ENCODE measurements at regions of chr4 and their contacts with region 1.

Region 1: DNA sequence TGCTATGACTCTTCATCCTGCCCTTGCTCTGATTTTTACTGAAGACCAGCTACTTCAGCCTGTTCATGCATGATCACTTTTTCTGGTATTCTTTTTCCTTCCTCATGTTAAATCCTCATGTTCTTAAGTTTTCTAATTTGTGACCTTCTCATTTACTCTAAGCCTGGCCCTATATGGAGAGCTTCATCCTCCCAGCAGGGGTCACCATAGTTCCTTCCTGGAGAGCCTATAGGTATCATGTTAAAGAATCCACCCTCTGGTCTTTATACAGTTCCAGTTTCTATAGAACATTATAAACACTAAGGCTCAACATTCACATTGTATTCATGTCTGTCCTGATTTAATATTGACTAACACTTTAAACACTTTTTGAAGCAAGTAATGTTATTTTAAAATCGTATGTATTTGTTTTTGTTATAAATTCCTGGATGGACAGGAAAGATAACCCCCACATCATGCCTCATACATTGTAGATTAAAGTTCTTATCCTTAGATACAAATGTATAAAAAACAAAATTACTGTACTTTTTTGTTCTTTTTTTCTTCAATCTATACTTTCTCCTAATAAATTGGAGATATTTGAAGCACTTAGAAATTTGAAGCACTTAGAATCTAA is 53.8 kb upstream of the OTUD4 start:
- ATAC-seq: peak; percentile 89 to 100 (median 94)
- H3K4me3 ChIP-seq: no peak overlapping the region
- H3K27ac ChIP-seq: no peak overlapping the region
- H3K4me1 ChIP-seq: no peaks in the 10 kb centered on the region

Region 2: DNA sequence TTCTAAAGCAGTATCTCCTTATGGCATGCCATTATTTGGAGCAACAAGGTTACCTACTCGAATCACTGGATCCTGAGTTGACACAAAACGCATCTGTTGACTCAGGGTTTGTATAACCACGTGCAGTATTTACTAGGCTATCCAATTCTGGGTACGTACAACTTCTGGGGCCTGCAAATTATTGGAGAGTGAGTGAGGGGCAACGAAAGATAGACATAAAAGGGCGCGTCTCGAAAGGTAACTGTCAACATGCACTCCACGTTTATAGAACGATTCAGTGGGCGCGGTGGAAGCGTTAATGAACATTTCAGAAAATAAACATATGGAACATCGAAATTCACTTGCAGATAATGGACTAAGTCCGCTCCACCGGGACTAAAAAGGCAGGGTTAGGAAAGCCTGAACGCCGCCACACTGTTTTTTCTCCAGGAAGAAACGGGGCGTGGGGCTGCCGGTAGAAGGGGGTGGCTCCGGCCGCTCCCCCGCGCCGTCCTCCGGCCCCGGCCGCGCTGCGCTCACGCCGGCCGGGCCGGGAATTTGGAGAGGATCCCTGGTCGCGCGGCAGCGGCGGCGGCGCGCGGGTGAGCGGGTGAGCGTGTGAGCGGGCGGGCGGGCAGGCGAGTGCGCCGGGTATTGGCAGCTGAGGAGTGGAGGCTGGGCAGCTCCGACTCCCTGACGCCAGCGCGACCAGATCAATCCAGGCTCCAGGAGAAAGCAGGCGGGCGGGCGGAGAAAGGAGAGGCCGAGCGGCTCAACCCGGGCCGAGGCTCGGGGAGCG is 247.2 kb after region 1 on chr4 and contains the start of gene SMAD1:
- in situ Hi-C with region 1: loop called in 1 of 9 experiments (anchors 10 kb)
- ATAC-seq: peak; percentile 70 to 90 (median 76)
- H3K4me3 ChIP-seq: peak within 1 kb of the TSS; percentile 57 to 82 (median 70)
- H3K27ac ChIP-seq: peak within 1 kb of the TSS; percentile 86 to 92
- H3K4me1 ChIP-seq: peaks cover 5 to 13% of the 10 kb centered on the region in 2 donors
- total RNA-seq, gene SMAD1: 10.2 to 95.2 (median 27.8) TPM

Region 3: DNA sequence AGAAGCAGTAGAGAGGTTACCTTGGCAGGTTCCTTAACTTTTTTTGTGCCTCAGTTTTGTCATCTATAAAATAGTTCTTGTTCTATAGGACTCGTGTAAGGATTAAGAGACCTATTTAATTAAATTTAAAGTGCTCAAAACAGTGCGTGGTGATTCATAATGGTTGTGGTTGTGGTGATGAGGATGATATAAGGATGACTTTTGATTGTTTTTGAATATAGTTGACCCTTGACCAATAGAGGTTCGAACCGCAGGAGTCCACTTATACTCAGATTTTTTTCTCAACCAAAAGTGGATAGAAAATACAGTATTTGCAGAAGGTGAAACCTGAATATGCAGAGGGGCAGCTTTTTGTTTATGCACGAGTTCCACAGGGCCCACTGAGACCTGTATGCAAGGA is 262.1 kb after region 1 on chr4:
- in situ Hi-C with region 1: no loop called
- ATAC-seq: no peak
- H3K4me3 ChIP-seq: no peak overlapping the region
- H3K27ac ChIP-seq: no peak overlapping the region
- H3K4me1 ChIP-seq: peaks cover 0 to 6% of the 10 kb centered on the region in 2 donors

Region 4: DNA sequence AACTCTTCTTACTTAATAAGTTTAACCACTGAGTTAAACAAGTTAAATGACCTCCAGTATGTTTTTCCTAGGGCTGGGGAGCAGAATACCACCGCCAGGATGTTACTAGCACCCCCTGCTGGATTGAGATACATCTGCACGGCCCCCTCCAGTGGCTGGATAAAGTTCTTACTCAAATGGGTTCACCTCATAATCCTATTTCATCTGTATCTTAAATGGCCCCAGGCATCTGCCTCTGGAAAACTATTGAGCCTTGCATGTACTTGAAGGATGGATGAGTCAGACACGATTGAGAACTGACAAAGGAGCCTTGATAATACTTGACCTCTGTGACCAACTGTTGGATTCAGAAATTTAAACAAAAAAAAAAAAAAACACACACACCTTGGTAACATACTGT is 323.5 kb after region 1 on chr4:
- in situ Hi-C with region 1: loop called in 2 of 9 experiments (anchors 25 kb)
- ATAC-seq: peak in 4 of 8 experiments; percentile 61 to 96 (median 94)
- H3K4me3 ChIP-seq: no peak overlapping the region
- H3K27ac ChIP-seq: no peak overlapping the region
- H3K4me1 ChIP-seq: no peaks in the 10 kb centered on the region

Region 5: GRCh38 chr4:145609481-145610427 is 375.6 kb after region 1 on chr4:
- in situ Hi-C with region 1: loop called in 7 of 9 experiments (anchors 10 to 25 kb)
- ATAC-seq: peak in 7 of 8 experiments; percentile 41 to 77 (median 57)
- H3K4me3 ChIP-seq: no peak overlapping the region
- H3K27ac ChIP-seq: no peak overlapping the region
- H3K4me1 ChIP-seq: no peaks in the 10 kb centered on the region

Region 6: GRCh38 chr4:145618932-145619638 is 384.9 kb after region 1 on chr4 and contains the start of gene MMAA:
- in situ Hi-C with region 1: loop called in 5 of 9 experiments (anchors 25 kb)
- ATAC-seq: peak; percentile 88 to 98 (median 98)
- H3K4me3 ChIP-seq: peak within 1 kb of the TSS; percentile 56 to 71 (median 63)
- H3K27ac ChIP-seq: peak within 1 kb of the TSS; percentile 83 to 91
- H3K4me1 ChIP-seq: peaks cover 0 to 6% of the 10 kb centered on the region in 2 donors
- total RNA-seq, gene MMAA: 2.3 to 15.2 (median 5.8) TPM